ENCODE measurements at regions of chr1 and their contacts with region 1.

Region 1: GRCh38 chr1:111720977-111721786 is 18.0 kb downstream of the INKA2 start:
- DNase-seq: peak; percentile 78
- H3K4me3 Mint-ChIP-seq: peak overlapping the region; percentile 1
- H3K27ac Mint-ChIP-seq: peak overlapping the region; percentile 17
- H3K4me1 Mint-ChIP-seq: peaks cover 32% of the 10 kb centered on the region
- H3K27me3 Mint-ChIP-seq: no peaks in the 10 kb centered on the region
- CTCF ChIP-seq: no peak

Region 2: GRCh38 chr1:111441573-111442192 is 279.5 kb before region 1 on chr1:
- CTCF ChIA-PET with region 1: no interaction called
- POLR2A ChIA-PET with region 1: no interaction called
- intact Hi-C with region 1: no loop called
- DNase-seq: peak; percentile 21
- H3K4me3 Mint-ChIP-seq: no peak overlapping the region
- H3K27ac Mint-ChIP-seq: no peak overlapping the region
- H3K4me1 Mint-ChIP-seq: peaks cover 19% of the 10 kb centered on the region
- H3K27me3 Mint-ChIP-seq: no peaks in the 10 kb centered on the region
- CTCF ChIP-seq: no peak

Region 3: DNA sequence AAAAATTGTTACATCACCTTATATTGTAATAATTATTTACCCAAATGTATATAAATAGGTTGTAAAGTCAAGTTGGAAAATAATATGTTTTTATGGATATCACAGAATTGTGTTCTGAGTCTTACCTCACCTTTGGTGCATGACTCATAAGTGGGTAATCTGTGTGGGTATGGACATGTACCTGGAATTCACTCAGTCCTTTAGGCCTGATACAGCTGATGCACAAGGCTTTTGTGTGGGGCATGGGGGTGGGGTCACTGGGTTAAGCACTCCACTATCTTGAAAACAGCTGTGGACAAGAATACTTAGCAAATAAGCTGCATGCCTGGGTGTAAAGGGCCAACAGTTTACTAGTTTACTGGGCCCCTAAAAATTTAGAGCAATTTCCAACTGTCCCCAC is 16.4 kb before region 1 on chr1:
- CTCF ChIA-PET with region 1: interaction called, 30 read pairs
- POLR2A ChIA-PET with region 1: interaction called, 3 read pairs
- intact Hi-C with region 1: no loop called
- DNase-seq: peak; percentile 71
- H3K4me3 Mint-ChIP-seq: no peak overlapping the region
- H3K27ac Mint-ChIP-seq: no peak overlapping the region
- H3K4me1 Mint-ChIP-seq: peaks cover 15% of the 10 kb centered on the region
- H3K27me3 Mint-ChIP-seq: no peaks in the 10 kb centered on the region
- CTCF ChIP-seq: no peak

Region 4: GRCh38 chr1:111733183-111733991 is 12.2 kb after region 1 on chr1:
- CTCF ChIA-PET with region 1: interaction called, 94 read pairs
- POLR2A ChIA-PET with region 1: interaction called, 27 read pairs
- intact Hi-C with region 1: no loop called
- DNase-seq: peak; percentile 31
- H3K4me3 Mint-ChIP-seq: no peak overlapping the region
- H3K27ac Mint-ChIP-seq: no peak overlapping the region
- H3K4me1 Mint-ChIP-seq: peaks cover 12% of the 10 kb centered on the region
- H3K27me3 Mint-ChIP-seq: no peaks in the 10 kb centered on the region
- CTCF ChIP-seq: no peak

Region 5: GRCh38 chr1:111739194-111739924 is 18.2 kb after region 1 on chr1 and contains the start of gene INKA2:
- CTCF ChIA-PET with region 1: interaction called, 94 read pairs
- POLR2A ChIA-PET with region 1: interaction called, 27 read pairs
- intact Hi-C with region 1: no loop called
- DNase-seq: peak; percentile 92
- H3K4me3 Mint-ChIP-seq: peak within 1 kb of the TSS; percentile 82
- H3K27ac Mint-ChIP-seq: peak within 1 kb of the TSS; percentile 94
- H3K4me1 Mint-ChIP-seq: peaks cover 17% of the 10 kb centered on the region
- H3K27me3 Mint-ChIP-seq: no peaks in the 10 kb centered on the region
- CTCF ChIP-seq: no peak
- total RNA-seq, gene INKA2: 3.5 and 6.6 TPM in 2 replicates

Region 6: GRCh38 chr1:111747282-111747734 is 26.1 kb after region 1 on chr1:
- CTCF ChIA-PET with region 1: interaction called, 39 read pairs
- POLR2A ChIA-PET with region 1: interaction called, 3 read pairs
- intact Hi-C with region 1: no loop called
- DNase-seq: peak; percentile 89
- H3K4me3 Mint-ChIP-seq: no peak overlapping the region
- H3K27ac Mint-ChIP-seq: no peak overlapping the region
- H3K4me1 Mint-ChIP-seq: no peaks in the 10 kb centered on the region
- H3K27me3 Mint-ChIP-seq: no peaks in the 10 kb centered on the region
- CTCF ChIP-seq: peak; percentile 61

Region 7: GRCh38 chr1:111755331-111756123 is 34.3 kb after region 1 on chr1 and contains the start of gene DDX20:
- CTCF ChIA-PET with region 1: interaction called, 24 read pairs
- POLR2A ChIA-PET with region 1: interaction called, 9 read pairs
- intact Hi-C with region 1: no loop called
- DNase-seq: peak; percentile 96
- H3K4me3 Mint-ChIP-seq: peak within 1 kb of the TSS; percentile 95
- H3K27ac Mint-ChIP-seq: peak within 1 kb of the TSS; percentile 95
- H3K4me1 Mint-ChIP-seq: peaks cover 6% of the 10 kb centered on the region
- H3K27me3 Mint-ChIP-seq: no peaks in the 10 kb centered on the region
- CTCF ChIP-seq: peak; percentile 88
- total RNA-seq, gene DDX20: 14.8 and 16.8 TPM in 2 replicates

Region 8: GRCh38 chr1:111778541-111779051 is 57.4 kb after region 1 on chr1:
- CTCF ChIA-PET with region 1: no interaction called
- POLR2A ChIA-PET with region 1: no interaction called
- intact Hi-C with region 1: no loop called
- DNase-seq: no peak
- H3K4me3 Mint-ChIP-seq: no peak overlapping the region
- H3K27ac Mint-ChIP-seq: no peak overlapping the region
- H3K4me1 Mint-ChIP-seq: no peaks in the 10 kb centered on the region
- H3K27me3 Mint-ChIP-seq: peaks cover 38% of the 10 kb centered on the region
- CTCF ChIP-seq: no peak

Measured in MCF 10A (cell line).